B cell (primary cell): ENCODE measurements at regions of chr2 and their contacts with region 1.

Region 1: GRCh38 chr2:221517696-221518151 is 54.4 kb downstream of the EPHA4 start:
- DNase-seq: peak; percentile 72
- ATAC-seq: peak; percentile 74
- H3K4me3 ChIP-seq: peak overlapping the region in 4 of 5 experiments; percentile 13 to 35 (median 28)
- H3K4me3 Mint-ChIP-seq: no peak overlapping the region
- H3K27ac ChIP-seq: peak overlapping the region; percentile 83 to 92
- H3K27ac Mint-ChIP-seq: no peak overlapping the region
- H3K4me1 ChIP-seq: peaks cover 57% of the 10 kb centered on the region in 2 donors
- H3K4me1 Mint-ChIP-seq: peaks cover 14% of the 10 kb centered on the region
- H3K27me3 ChIP-seq: no peaks in the 10 kb centered on the region
- H3K27me3 Mint-ChIP-seq: no peaks in the 10 kb centered on the region
- CTCF ChIP-seq: no peak

Region 2: DNA sequence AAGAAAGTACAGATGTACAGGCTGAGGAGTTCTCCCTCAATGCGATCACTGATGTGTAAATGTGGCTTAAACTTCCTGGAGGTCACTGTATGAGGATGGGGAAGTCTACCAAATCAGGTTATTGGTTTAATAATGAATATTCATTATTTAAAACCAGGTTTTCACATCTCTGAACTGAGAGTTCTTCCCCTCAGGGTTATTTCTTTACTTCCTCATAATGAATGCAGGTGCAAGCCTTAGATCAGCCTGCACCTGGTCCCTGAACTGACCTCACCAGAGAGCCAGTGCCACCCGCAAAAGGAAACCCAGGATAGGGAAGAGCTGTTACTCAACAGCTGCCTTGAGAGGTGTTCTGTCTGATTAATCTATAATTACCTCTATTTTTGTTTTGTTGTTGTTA is 314.6 kb before region 1 on chr2:
- CTCF ChIA-PET with region 1: no interaction called
- POLR2A ChIA-PET with region 1: no interaction called
- intact Hi-C with region 1: loop called (anchors 2 kb)
- DNase-seq: peak; percentile 83
- ATAC-seq: peak; percentile 89
- H3K4me3 ChIP-seq: no peak overlapping the region
- H3K4me3 Mint-ChIP-seq: peak overlapping the region; percentile 68
- H3K27ac ChIP-seq: no peak overlapping the region
- H3K27ac Mint-ChIP-seq: peak overlapping the region; percentile 72
- H3K4me1 ChIP-seq: peaks cover 17 to 33% of the 10 kb centered on the region in 2 donors
- H3K4me1 Mint-ChIP-seq: peaks cover 43% of the 10 kb centered on the region
- H3K27me3 ChIP-seq: no peaks in the 10 kb centered on the region
- H3K27me3 Mint-ChIP-seq: no peaks in the 10 kb centered on the region
- CTCF ChIP-seq: no peak

Region 3: GRCh38 chr2:221444106-221444505 is 73.6 kb before region 1 on chr2:
- CTCF ChIA-PET with region 1: no interaction called
- POLR2A ChIA-PET with region 1: no interaction called
- intact Hi-C with region 1: no loop called
- DNase-seq: no peak
- ATAC-seq: no peak
- H3K4me3 ChIP-seq: no peak overlapping the region
- H3K4me3 Mint-ChIP-seq: no peak overlapping the region
- H3K27ac ChIP-seq: no peak overlapping the region
- H3K27ac Mint-ChIP-seq: no peak overlapping the region
- H3K4me1 ChIP-seq: peaks cover 7 to 9% of the 10 kb centered on the region in 2 donors
- H3K4me1 Mint-ChIP-seq: peaks cover 10% of the 10 kb centered on the region
- H3K27me3 ChIP-seq: no peaks in the 10 kb centered on the region
- H3K27me3 Mint-ChIP-seq: no peaks in the 10 kb centered on the region
- CTCF ChIP-seq: no peak

Region 4: GRCh38 chr2:221465776-221466175 is 51.9 kb before region 1 on chr2:
- CTCF ChIA-PET with region 1: interaction called, 4 read pairs
- POLR2A ChIA-PET with region 1: no interaction called
- intact Hi-C with region 1: loop called (anchors 5 kb)
- DNase-seq: peak; percentile 52
- ATAC-seq: peak; percentile 78
- H3K4me3 ChIP-seq: peak overlapping the region in 4 of 5 experiments; percentile 8 to 29 (median 22)
- H3K4me3 Mint-ChIP-seq: peak overlapping the region; percentile 80
- H3K27ac ChIP-seq: no peak overlapping the region
- H3K27ac Mint-ChIP-seq: peak overlapping the region; percentile 46
- H3K4me1 ChIP-seq: peaks cover 42 to 50% of the 10 kb centered on the region in 2 donors
- H3K4me1 Mint-ChIP-seq: peaks cover 53% of the 10 kb centered on the region
- H3K27me3 ChIP-seq: peaks cover 0 to 3% (median 0%) of the 10 kb centered on the region in 4 experiments
- H3K27me3 Mint-ChIP-seq: no peaks in the 10 kb centered on the region
- CTCF ChIP-seq: no peak

Region 5: GRCh38 chr2:221503965-221504364 is 13.8 kb before region 1 on chr2:
- CTCF ChIA-PET with region 1: no interaction called
- POLR2A ChIA-PET with region 1: interaction called, 3 read pairs
- intact Hi-C with region 1: loop called (anchors 2 kb)
- DNase-seq: no peak
- ATAC-seq: no peak
- H3K4me3 ChIP-seq: no peak overlapping the region
- H3K4me3 Mint-ChIP-seq: peak overlapping the region; percentile 26
- H3K27ac ChIP-seq: no peak overlapping the region
- H3K27ac Mint-ChIP-seq: no peak overlapping the region
- H3K4me1 ChIP-seq: peaks cover 7 to 14% of the 10 kb centered on the region in 2 donors
- H3K4me1 Mint-ChIP-seq: peaks cover 30% of the 10 kb centered on the region
- H3K27me3 ChIP-seq: no peaks in the 10 kb centered on the region
- H3K27me3 Mint-ChIP-seq: no peaks in the 10 kb centered on the region
- CTCF ChIP-seq: no peak

Region 6: GRCh38 chr2:221554769-221555493 is 37.2 kb after region 1 on chr2:
- CTCF ChIA-PET with region 1: interaction called, 6 read pairs
- POLR2A ChIA-PET with region 1: no interaction called
- intact Hi-C with region 1: loop called (anchors 2 kb)
- DNase-seq: peak; percentile 76
- ATAC-seq: peak; percentile 92
- H3K4me3 ChIP-seq: peak overlapping the region in 2 of 5 experiments; percentile 3 to 23
- H3K4me3 Mint-ChIP-seq: peak overlapping the region; percentile 77
- H3K27ac ChIP-seq: peak overlapping the region; percentile 50 to 55
- H3K27ac Mint-ChIP-seq: peak overlapping the region; percentile 87
- H3K4me1 ChIP-seq: peaks cover 30 to 39% of the 10 kb centered on the region in 2 donors
- H3K4me1 Mint-ChIP-seq: peaks cover 64% of the 10 kb centered on the region
- H3K27me3 ChIP-seq: no peaks in the 10 kb centered on the region
- H3K27me3 Mint-ChIP-seq: no peaks in the 10 kb centered on the region
- CTCF ChIP-seq: no peak

Region 7: GRCh38 chr2:221573430-221574230 is 55.9 kb after region 1 on chr2:
- CTCF ChIA-PET with region 1: interaction called, 15 read pairs
- POLR2A ChIA-PET with region 1: interaction called, 6 read pairs
- intact Hi-C with region 1: loop called (anchors 2 kb)
- DNase-seq: peak; percentile 86
- ATAC-seq: peak; percentile 48
- H3K4me3 ChIP-seq: peak overlapping the region; percentile 57 to 97 (median 73)
- H3K4me3 Mint-ChIP-seq: peak overlapping the region; percentile 94
- H3K27ac ChIP-seq: no peak overlapping the region
- H3K27ac Mint-ChIP-seq: peak overlapping the region; percentile 33
- H3K4me1 ChIP-seq: peaks cover 21 to 42% of the 10 kb centered on the region in 2 donors
- H3K4me1 Mint-ChIP-seq: peaks cover 40% of the 10 kb centered on the region
- H3K27me3 ChIP-seq: peaks cover 0 to 47% (median 30%) of the 10 kb centered on the region in 4 experiments
- H3K27me3 Mint-ChIP-seq: peaks cover 58% of the 10 kb centered on the region
- CTCF ChIP-seq: peak; percentile 98